K562 (cell line): ENCODE measurements at regions of chr7 and their contacts with region 1.

Region 1: GRCh38 chr7:95632609-95633008 is 36.3 kb upstream of the PDK4 start:
- DNase-seq: no peak
- ATAC-seq: no peak
- H3K4me3 ChIP-seq: no peak overlapping the region
- H3K27ac ChIP-seq: no peak overlapping the region
- H3K4me1 ChIP-seq: no peaks in the 10 kb centered on the region
- H3K27me3 ChIP-seq: no peaks in the 10 kb centered on the region
- CTCF ChIP-seq: no peak
- EP300 ChIP-seq: no peak
- POLR2A ChIP-seq: no peak
- RAD21 ChIP-seq: no peak

Region 2: GRCh38 chr7:95675016-95675415 is 42.4 kb after region 1 on chr7:
- CTCF ChIA-PET with region 1: no interaction called
- POLR2A ChIA-PET with region 1: no interaction called
- in situ Hi-C with region 1: loop called (anchors 5 kb)
- intact Hi-C with region 1: no loop called
- DNase-seq: no peak
- ATAC-seq: no peak
- H3K4me3 ChIP-seq: no peak overlapping the region
- H3K27ac ChIP-seq: no peak overlapping the region
- H3K4me1 ChIP-seq: no peaks in the 10 kb centered on the region
- H3K27me3 ChIP-seq: no peaks in the 10 kb centered on the region
- CTCF ChIP-seq: no peak
- EP300 ChIP-seq: no peak
- POLR2A ChIP-seq: no peak
- RAD21 ChIP-seq: no peak